Activated T-helper 2 cell treated with anti-CD3 and anti-CD28 coated beads, Interferon-gamma antibody, Interleukin-2, Interleukin-4, amounts not matched to agents 10 μg/mL and 5 μg/mL and 100 μg/mL, durations not matched to agents 14 hours and 24 hours and 36 hours (primary cell): ENCODE measurements at regions of chr6 and their contacts with region 1.

Region 1: GRCh38 chr6:15776458-15776980 is 113.7 kb upstream of the DTNBP1 start:
- DNase-seq: peak; percentile 33
- H3K4me3 Mint-ChIP-seq: peak overlapping the region; percentile 70
- H3K27ac Mint-ChIP-seq: peak overlapping the region; percentile 96
- H3K4me1 Mint-ChIP-seq: peaks cover 77% of the 10 kb centered on the region
- H3K27me3 Mint-ChIP-seq: no peaks in the 10 kb centered on the region

Region 2: DNA sequence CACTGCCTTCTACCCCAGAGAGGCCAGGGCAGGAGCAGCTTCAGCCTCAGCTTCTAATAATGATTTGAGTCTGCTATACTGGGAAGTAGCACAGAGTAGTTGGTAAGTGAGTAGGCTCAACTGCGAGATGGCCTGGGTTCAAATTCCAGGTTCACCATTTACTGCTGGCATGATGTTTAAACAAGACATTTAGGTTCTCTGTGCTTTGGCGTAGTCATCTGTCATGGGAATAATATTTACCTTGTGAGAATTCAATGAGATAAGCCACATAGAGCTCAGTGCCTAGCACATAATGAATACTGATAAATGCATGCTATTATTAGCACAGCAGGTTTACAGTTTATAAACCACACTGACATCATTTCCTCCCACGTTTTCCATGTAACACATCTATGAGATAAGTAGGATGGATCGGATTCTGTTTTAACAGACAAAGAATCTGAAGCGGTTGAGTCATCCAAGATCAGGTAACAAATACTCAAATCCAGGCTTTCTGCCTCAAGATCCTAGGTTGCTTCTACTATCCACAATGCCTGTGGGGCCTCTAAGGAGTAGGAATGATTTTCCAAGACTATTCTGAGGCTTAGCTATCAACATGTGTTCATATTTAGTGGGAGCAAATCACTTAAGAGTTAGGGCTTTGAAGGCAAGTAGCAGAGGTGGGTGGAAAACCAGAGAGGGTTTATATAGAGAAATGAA is 40.8 kb before region 1 on chr6:
- intact Hi-C with region 1: loop called (anchors 1 kb)
- DNase-seq: no peak
- H3K4me3 Mint-ChIP-seq: peak overlapping the region; percentile 59
- H3K27ac Mint-ChIP-seq: peak overlapping the region; percentile 83
- H3K4me1 Mint-ChIP-seq: peaks cover 54% of the 10 kb centered on the region
- H3K27me3 Mint-ChIP-seq: no peaks in the 10 kb centered on the region

Region 3: DNA sequence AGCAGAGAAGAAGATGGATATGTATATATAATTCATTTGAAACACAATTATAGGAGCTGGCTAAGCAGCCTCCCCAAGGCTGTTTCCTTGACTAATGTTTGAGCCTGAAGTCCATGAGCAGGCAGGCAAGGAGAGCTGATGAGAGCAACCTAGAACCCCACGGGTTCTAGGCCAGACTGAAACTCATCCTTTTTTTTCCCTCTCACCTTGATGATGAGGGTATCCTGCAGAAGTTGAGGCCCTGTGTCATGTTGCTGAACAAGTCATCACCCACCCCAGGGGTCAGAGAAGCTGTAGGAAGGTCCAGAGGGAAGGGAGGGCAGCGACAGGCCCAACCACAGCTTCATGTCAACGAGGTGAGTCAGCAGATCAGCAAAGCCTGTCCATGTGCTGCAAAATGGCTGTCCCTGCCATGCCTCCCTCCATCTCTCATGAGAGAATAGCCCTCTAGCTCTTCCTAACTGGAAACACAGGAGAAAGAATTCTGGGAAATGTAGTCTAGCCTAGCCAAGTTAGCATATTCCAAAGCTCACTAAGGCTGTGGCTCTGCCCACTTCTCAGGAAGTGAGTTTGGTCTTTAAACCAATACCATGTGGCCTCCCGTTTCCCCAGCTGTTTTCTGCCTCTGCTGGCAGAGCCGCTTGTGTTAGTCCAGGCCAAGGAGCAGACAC is 22.3 kb before region 1 on chr6:
- intact Hi-C with region 1: no loop called
- DNase-seq: no peak
- H3K4me3 Mint-ChIP-seq: no peak overlapping the region
- H3K27ac Mint-ChIP-seq: no peak overlapping the region
- H3K4me1 Mint-ChIP-seq: peaks cover 8% of the 10 kb centered on the region
- H3K27me3 Mint-ChIP-seq: no peaks in the 10 kb centered on the region

Region 4: DNA sequence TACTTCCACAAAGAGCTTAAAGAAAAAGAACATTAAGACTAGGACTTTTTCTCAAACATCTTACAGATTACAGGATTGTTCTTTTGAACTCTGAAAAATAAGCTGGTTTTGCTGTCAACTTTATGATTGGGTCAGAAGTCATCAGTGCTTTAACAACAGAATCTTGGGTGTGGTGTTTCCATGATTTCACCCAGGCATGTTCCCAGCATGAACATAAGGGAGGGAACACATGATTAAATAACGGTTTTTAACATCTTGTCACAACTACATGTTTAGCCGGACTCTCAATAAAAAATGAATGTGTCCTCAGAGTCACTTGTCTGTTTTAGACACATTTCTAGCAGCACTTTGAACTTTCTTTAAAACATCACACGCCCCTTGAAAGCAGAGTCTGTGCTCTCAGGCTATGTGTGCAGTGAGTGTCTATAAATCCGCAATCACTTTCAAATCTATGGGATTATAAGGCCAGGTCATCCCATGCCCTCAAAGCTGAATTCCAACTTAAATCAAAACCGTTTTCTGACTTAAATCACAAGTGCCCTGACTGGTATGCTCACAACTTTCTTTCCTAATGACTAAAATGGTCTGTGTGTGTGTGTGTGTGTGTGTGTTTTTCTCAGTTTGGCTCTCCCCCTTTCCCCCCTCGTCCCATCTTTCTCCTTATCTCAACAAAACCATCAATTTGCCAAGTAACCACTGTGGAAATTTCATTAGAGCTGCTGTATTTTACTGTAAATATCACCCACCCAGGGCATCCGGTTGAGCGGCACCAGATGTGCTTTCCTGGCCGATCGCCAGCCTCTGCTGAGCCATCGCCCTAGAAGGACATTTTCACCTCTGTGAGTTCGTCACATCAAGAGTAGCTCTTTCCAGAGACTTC is 103.1 kb after region 1 on chr6:
- intact Hi-C with region 1: loop called (anchors 1 kb)
- DNase-seq: peak; percentile 29
- H3K4me3 Mint-ChIP-seq: no peak overlapping the region
- H3K27ac Mint-ChIP-seq: peak overlapping the region; percentile 68
- H3K4me1 Mint-ChIP-seq: peaks cover 49% of the 10 kb centered on the region
- H3K27me3 Mint-ChIP-seq: no peaks in the 10 kb centered on the region

Region 5: GRCh38 chr6:15911753-15912504 is 135.4 kb after region 1 on chr6:
- intact Hi-C with region 1: loop called (anchors 1 kb)
- DNase-seq: no peak
- H3K4me3 Mint-ChIP-seq: peak overlapping the region; percentile 56
- H3K27ac Mint-ChIP-seq: peak overlapping the region; percentile 89
- H3K4me1 Mint-ChIP-seq: peaks cover 67% of the 10 kb centered on the region
- H3K27me3 Mint-ChIP-seq: no peaks in the 10 kb centered on the region

Region 6: DNA sequence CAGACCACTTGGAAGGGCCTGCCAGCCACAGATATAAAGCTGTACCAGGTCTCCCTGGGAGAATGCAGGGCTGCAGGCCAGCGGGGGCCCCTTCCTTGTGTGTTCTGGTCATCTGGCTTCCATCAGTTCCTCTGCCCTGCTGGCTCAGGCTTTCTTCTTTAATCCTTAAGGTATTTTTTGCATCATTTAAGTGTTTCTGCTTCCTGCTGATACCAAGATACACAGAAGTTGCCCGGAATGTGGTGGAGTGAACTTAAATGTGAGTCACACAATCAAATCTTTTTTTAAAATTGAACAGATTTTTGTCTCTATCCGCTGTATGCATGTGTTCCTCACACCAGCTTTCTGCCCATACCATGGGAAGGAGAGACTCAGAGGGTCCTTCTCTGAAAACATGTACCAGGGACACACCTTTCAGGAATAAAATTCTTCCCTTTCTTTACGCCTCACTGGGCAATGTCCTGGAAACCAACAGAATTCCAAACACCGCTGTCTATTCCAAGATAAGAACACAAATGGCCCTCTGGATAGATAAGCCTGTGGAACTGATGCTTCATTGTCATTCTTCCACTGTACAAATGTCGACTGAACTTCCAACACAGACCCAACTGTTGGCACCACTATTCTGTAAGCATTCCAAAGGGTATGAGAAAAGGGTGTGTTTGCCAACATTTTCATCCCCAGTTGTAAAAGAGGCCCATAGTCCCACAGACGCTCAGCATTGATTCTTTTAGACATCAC is 146.2 kb after region 1 on chr6:
- intact Hi-C with region 1: no loop called
- DNase-seq: no peak
- H3K4me3 Mint-ChIP-seq: no peak overlapping the region
- H3K27ac Mint-ChIP-seq: no peak overlapping the region
- H3K4me1 Mint-ChIP-seq: peaks cover 6% of the 10 kb centered on the region
- H3K27me3 Mint-ChIP-seq: no peaks in the 10 kb centered on the region

Region 7: DNA sequence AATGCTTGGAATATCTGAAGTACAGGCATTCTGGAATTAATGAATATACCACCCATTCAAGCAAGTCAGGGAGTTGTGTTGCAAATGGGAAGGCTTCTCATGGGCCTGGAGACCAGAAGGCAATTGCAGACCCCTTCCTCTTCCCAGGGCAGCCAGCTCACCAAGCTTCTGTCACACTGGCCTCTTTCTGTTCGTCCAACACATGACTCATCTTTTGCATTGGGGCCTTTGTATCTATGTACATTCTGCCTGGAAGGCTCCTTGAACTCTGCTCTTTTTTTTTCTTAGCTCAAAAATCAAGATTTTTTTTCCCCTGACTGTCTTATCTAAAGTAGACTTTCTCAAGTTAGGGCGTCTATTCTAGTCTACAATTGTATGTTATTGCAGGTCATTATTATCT is 219.5 kb after region 1 on chr6:
- intact Hi-C with region 1: loop called (anchors 2 kb)
- DNase-seq: no peak
- H3K4me3 Mint-ChIP-seq: no peak overlapping the region
- H3K27ac Mint-ChIP-seq: peak overlapping the region; percentile 55
- H3K4me1 Mint-ChIP-seq: peaks cover 24% of the 10 kb centered on the region
- H3K27me3 Mint-ChIP-seq: no peaks in the 10 kb centered on the region